GM10248 (cell line): ENCODE measurements at regions of chr1 and their contacts with region 1.

Region 1: GRCh38 chr1:241525026-241525425 is 5.5 kb upstream of the FH start:
- DNase-seq: no peak
- CTCF ChIP-seq: no peak

Region 2: GRCh38 chr1:241536304-241536703 is 11.3 kb after region 1 on chr1:
- CTCF ChIA-PET with region 1: no interaction called
- POLR2A ChIA-PET with region 1: no interaction called
- DNase-seq: no peak
- CTCF ChIP-seq: no peak

Region 3: DNA sequence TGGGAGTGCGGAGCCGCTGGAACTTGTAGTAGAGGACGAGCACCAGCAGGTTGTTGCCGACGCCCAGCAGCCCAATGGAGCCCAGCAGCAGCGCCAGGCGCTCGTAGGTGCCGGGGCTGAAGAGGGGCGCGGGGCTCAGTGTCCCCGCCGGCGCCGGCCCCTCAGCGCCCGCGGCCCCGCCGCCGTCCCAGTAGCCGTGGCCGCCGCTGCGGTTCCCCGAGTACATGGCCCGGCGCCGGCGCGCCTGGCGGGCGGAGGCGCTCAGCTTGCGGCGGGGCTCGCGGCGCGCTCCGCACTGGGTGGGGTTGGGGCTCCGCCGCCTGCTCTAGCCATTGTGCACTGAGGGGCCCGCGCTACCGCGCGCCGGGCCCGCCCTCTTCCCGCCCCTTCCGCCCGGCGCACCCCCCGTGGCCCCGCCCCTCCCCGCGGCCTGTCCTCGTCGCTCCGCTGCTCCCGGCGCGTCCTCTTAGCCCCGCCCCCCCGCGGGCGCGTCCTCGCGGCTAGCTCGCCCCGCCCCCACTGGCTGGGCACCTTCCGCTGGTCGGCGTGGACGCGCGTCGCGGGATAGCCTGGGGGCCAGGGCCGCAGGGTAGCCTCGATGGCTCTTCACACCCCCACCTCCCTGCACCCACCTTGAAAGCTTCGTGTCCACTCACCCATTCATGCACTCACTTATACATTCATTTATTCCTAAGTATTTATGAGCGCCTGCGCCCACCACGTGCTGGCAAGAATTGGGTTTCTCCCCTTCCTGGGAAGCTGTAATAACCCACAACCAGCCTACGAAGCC is 115.2 kb after region 1 on chr1 and contains the starts of genes CHML and OPN3:
- CTCF ChIA-PET with region 1: no interaction called
- POLR2A ChIA-PET with region 1: interaction called, 10 read pairs
- DNase-seq: peak; percentile 97
- CTCF ChIP-seq: no peak